K562 (cell line): ENCODE measurements at regions of chr6 and their contacts with region 1.

Region 1: GRCh38 chr6:31795616-31796298 is at the start of gene VARS1:
- DNase-seq: peak; percentile 99 to 100 (median 100)
- ATAC-seq: peak; percentile 92
- H3K4me3 ChIP-seq: peak within 1 kb of the TSS; percentile 61
- H3K27ac ChIP-seq: peak within 1 kb of the TSS; percentile 97
- H3K4me1 ChIP-seq: peaks cover 17 to 44% of the 10 kb centered on the region in 2 experiments
- H3K27me3 ChIP-seq: no peaks in the 10 kb centered on the region
- CTCF ChIP-seq: peak; percentile 99 to 100 (median 100)
- EP300 ChIP-seq: peak; percentile 59; the same call in 1 of the 2 replicates
- POLR2A ChIP-seq: peak; percentile 38; the same call in 1 of the 2 replicates
- RAD21 ChIP-seq: peak; percentile 99 to 100
- polyA plus RNA-seq, gene VARS1: 2.9 to 10.4 TPM

Region 2: GRCh38 chr6:31776989-31777666 is 18.6 kb before region 1 on chr6 and contains the start of gene VWA7:
- CTCF ChIA-PET with region 1: interaction called, 3 read pairs
- POLR2A ChIA-PET with region 1: interaction called, 47 read pairs
- in situ Hi-C with region 1: no loop called
- intact Hi-C with region 1: loop called (anchors 2 kb)
- DNase-seq: peak; percentile 98 to 99 (median 99)
- ATAC-seq: peak; percentile 91
- H3K4me3 ChIP-seq: peak within 1 kb of the TSS; percentile 10; the same call in 1 of the 2 replicates
- H3K27ac ChIP-seq: peak within 1 kb of the TSS; percentile 87
- H3K4me1 ChIP-seq: peaks cover 43 to 85% of the 10 kb centered on the region in 2 experiments
- H3K27me3 ChIP-seq: no peaks in the 10 kb centered on the region
- CTCF ChIP-seq: peak; percentile 14 to 44 (median 24); a peak in 2 of 6 replicates
- EP300 ChIP-seq: peak; percentile 88
- POLR2A ChIP-seq: peak; percentile 84; the same call in 1 of the 2 replicates
- RAD21 ChIP-seq: peak; percentile 46 to 80
- polyA plus RNA-seq, gene VWA7: 0.18 to 0.32 TPM

Region 3: GRCh38 chr6:31806465-31807272 is 10.9 kb after region 1 on chr6 and contains the start of gene LSM2:
- CTCF ChIA-PET with region 1: interaction called, 3 read pairs
- POLR2A ChIA-PET with region 1: interaction called, 58 read pairs
- in situ Hi-C with region 1: no loop called
- intact Hi-C with region 1: no loop called
- DNase-seq: peak; percentile 100
- ATAC-seq: peak; percentile 98
- H3K4me3 ChIP-seq: peak within 1 kb of the TSS; percentile 66
- H3K27ac ChIP-seq: peak within 1 kb of the TSS; percentile 86
- H3K4me1 ChIP-seq: peaks cover 14 to 30% of the 10 kb centered on the region in 2 experiments
- H3K27me3 ChIP-seq: no peaks in the 10 kb centered on the region
- CTCF ChIP-seq: peak; percentile 20 to 66 (median 36); a peak in 5 of 6 replicates
- EP300 ChIP-seq: peak; percentile 32; the same call in 1 of the 2 replicates
- POLR2A ChIP-seq: peak; percentile 97
- RAD21 ChIP-seq: peak; percentile 28 to 42; a peak in 3 of 4 replicates
- polyA plus RNA-seq, gene LSM2: 405 to 407 TPM

Region 4: DNA sequence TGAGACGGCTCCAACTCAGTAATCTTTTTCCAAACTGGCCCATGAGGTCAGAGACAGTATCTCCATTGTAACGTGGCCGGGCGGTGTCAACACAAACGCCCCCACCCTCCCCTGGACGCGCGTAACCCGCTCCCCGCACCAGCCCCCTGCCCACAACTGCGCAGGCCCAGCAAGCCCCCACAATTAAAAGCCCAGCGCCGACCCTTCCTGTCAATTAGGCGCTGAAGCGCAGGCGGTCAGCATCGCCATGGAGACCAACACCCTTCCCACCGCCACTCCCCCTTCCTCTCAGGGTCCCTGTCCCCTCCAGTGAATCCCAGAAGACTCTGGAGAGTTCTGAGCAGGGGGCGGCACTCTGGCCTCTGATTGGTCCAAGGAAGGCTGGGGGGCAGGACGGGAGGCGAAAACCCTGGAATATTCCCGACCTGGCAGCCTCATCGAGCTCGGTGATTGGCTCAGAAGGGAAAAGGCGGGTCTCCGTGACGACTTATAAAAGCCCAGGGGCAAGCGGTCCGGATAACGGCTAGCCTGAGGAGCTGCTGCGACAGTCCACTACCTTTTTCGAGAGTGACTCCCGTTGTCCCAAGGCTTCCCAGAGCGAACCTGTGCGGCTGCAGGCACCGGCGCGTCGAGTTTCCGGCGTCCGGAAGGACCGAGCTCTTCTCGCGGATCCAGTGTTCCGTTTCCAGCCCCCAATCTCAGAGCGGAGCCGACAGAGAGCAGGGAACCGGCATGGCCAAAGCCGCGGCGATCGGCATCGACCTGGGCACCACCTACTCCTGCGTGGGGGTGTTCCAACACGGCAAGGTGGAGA is 19.5 kb after region 1 on chr6 and contains the starts of genes HSPA1A and HSPA1L:
- CTCF ChIA-PET with region 1: no interaction called
- POLR2A ChIA-PET with region 1: interaction called, 40 read pairs
- in situ Hi-C with region 1: no loop called
- intact Hi-C with region 1: loop called (anchors 2 kb)
- DNase-seq: peak; percentile 97 to 100 (median 98)
- ATAC-seq: peak; percentile 73
- H3K4me3 ChIP-seq: peak within 1 kb of the TSS; percentile 54
- H3K27ac ChIP-seq: peak within 1 kb of the TSS; percentile 97
- H3K4me1 ChIP-seq: peaks cover 29 to 37% of the 10 kb centered on the region in 2 experiments
- H3K27me3 ChIP-seq: no peaks in the 10 kb centered on the region
- CTCF ChIP-seq: 0 out of 6 replicates have a peak, but pooled peaks of 1 of the 3 experiments have one; percentile 1
- EP300 ChIP-seq: peak; percentile 85
- POLR2A ChIP-seq: peak; percentile 100
- RAD21 ChIP-seq: peak; percentile 16 to 30; a peak in 3 of 4 replicates
- polyA plus RNA-seq, gene HSPA1A: 2.2 to 4.1 TPM
- polyA plus RNA-seq, gene HSPA1L: 0.14 to 0.34 TPM

Region 5: GRCh38 chr6:31822036-31822821 is 26.5 kb after region 1 on chr6:
- CTCF ChIA-PET with region 1: no interaction called
- POLR2A ChIA-PET with region 1: interaction called, 25 read pairs
- in situ Hi-C with region 1: no loop called
- intact Hi-C with region 1: loop called (anchors 1 kb)
- DNase-seq: peak; percentile 95 to 100 (median 96)
- ATAC-seq: peak; percentile 77
- H3K4me3 ChIP-seq: peak overlapping the region; percentile 59
- H3K27ac ChIP-seq: peak overlapping the region; percentile 99
- H3K4me1 ChIP-seq: peaks cover 51 to 58% of the 10 kb centered on the region in 2 experiments
- H3K27me3 ChIP-seq: no peaks in the 10 kb centered on the region
- CTCF ChIP-seq: no peak; a peak in 1 of 6 replicates
- EP300 ChIP-seq: peak; percentile 77
- POLR2A ChIP-seq: peak; percentile 91
- RAD21 ChIP-seq: no peak; a peak in 1 of 4 replicates

Region 6: GRCh38 chr6:31901953-31902643 is 106.3 kb after region 1 on chr6 and contains the start of gene ZBTB12:
- CTCF ChIA-PET with region 1: no interaction called
- POLR2A ChIA-PET with region 1: no interaction called
- in situ Hi-C with region 1: no loop called
- intact Hi-C with region 1: loop called (anchors 1 kb)
- DNase-seq: peak; percentile 98
- ATAC-seq: peak; percentile 84
- H3K4me3 ChIP-seq: peak within 1 kb of the TSS; percentile 75
- H3K27ac ChIP-seq: peak within 1 kb of the TSS; percentile 84
- H3K4me1 ChIP-seq: peaks cover 31 to 36% of the 10 kb centered on the region in 2 experiments; a peak in 4 of 5 replicates
- H3K27me3 ChIP-seq: no peaks in the 10 kb centered on the region
- CTCF ChIP-seq: peak in 1 of 3 experiments; percentile 15; a peak in 1 of 6 replicates
- EP300 ChIP-seq: no peak
- POLR2A ChIP-seq: peak; percentile 72
- RAD21 ChIP-seq: peak; percentile 41 to 50
- polyA plus RNA-seq, gene ZBTB12: 0.03 TPM in 1 of 2 experiments, not detected in the other